Colonic mucosa (tissue), 4 donors: ENCODE measurements at regions of chr18 and their contacts with region 1.

Region 1: DNA sequence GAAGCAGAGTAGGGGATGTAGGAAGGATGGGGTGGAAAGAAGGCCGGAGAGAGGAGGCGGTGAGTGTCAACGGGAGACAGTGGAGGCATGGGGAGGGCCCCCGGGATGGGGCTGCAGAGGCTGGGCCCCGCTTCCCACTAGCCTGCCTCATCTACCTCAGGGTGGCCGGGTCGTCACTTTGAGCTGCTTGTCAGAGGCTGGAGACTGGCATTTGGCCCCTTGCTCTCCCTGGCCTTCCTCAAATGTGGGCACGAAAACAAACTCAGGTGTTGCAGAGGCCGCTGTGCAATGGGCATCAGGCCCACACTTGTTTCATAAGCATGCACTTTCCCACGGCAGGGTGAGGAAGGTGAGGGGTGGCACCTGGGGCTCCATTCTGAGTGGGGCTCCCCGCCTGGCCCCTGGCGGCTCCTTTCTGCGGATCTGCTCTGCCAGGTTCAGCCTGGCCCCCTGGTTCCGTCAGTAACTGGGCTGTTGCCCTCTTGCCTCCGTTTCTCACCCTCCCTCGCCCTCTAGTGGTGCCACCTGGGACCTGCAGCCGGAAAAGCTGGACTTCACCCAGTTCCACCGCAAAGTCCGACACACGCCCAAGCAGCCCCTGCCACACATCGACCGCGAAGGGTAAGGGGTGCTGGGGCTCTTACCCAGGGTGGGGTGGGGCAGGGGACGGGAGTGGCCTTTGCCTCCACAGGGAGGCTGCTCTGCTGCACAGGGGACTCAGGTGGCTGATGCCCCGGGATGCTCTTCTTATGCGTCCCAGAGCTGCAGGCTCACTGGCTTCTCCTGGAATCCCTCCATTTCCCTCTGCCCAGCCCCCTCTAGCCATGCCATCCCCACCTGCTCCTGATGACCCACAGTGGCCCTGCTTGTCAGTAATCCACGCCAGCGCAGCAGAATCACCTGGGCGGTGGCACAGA is 125.4 kb downstream of the CTIF start:
- DNase-seq: peak; percentile 80
- H3K4me3 ChIP-seq: no peak overlapping the region
- H3K27ac ChIP-seq: no peak overlapping the region
- H3K4me1 ChIP-seq: no peaks in the 10 kb centered on the region
- H3K27me3 ChIP-seq: no peaks in the 10 kb centered on the region
- CTCF ChIP-seq: peak; percentile 81

Region 2: DNA sequence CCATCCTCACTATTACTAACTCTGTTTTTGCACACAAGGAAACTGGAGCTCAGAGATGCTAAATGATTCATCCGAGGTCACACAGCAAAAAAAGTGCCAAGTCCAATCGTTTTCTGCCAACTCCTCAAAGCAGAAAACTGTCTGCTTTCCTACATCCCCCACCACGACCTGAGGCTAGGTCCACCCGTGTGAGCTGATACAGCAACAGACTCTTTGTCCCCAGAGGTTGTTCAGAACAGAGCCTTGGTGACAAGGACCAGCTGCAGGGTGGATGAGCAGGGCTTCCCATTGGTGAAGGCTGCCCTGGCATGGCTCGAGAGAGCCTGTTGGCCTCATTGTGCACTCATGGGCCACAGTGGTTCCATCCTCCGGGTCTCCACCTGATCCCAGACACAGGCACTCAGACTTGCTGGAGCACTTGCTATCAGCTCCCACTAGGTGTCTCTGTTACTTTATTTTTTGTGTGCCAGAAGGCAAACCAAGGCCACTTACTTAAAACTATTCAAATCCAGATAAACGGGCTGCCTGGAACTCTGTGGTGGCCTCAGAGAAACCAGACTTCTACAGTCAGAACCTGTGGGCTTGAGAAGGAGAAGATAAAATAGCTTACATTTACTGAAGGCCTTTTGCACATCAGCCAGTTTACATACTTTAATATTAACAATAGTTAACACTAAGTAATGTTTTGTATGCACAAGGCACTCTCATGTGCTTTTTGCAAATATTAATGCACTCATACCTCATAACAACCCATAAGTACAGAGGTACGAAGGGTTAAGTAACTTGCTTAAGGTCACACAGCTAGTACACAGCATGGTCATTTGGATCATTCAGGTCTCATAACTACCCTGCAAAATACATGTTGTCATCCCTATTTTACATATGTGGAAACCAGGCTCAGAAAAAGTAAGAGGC is 188.3 kb before region 1 on chr18:
- intact Hi-C with region 1: loop called (anchors 1 kb)
- DNase-seq: no peak
- H3K4me3 ChIP-seq: no peak overlapping the region
- H3K27ac ChIP-seq: no peak overlapping the region
- H3K4me1 ChIP-seq: no peaks in the 10 kb centered on the region
- H3K27me3 ChIP-seq: no peaks in the 10 kb centered on the region
- CTCF ChIP-seq: peak; percentile 67

Region 3: DNA sequence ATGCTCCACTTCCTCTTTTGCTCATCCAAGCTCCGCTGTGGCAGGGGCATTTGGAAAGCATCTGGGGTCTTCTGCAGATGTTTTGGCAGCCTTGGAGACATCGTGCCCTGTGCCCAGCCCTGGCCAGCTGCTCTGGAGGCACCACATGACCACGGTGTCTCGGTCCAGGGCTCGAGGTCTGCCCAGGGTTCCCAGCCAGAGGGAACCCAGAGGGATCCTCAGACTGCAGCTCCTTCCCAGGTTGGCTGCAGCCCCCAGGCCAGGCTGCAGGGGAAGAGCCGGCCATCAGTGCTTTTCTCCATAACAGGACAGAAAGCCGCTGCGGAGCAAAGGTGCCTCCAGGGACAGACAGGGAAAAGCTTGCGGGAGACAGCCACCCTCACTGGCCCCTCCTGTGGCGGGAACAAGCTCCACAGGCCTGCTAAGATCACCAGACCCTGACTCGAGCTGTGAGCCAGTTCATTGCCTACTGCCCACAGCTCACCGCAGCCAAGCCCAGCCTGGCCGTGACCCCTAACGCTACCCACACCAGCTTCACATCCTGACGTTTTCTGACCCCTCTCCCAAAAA is 211.8 kb after region 1 on chr18:
- intact Hi-C with region 1: no loop called
- DNase-seq: no peak
- H3K4me3 ChIP-seq: no peak overlapping the region
- H3K27ac ChIP-seq: no peak overlapping the region
- H3K4me1 ChIP-seq: no peaks in the 10 kb centered on the region
- H3K27me3 ChIP-seq: no peaks in the 10 kb centered on the region
- CTCF ChIP-seq: no peak